Colonic mucosa (tissue), 4 donors: ENCODE measurements at regions of chrX and their contacts with region 1.

Region 1: GRCh38 chrX:116204932-116205331 is 34.4 kb downstream of the AGTR2 start:
- DNase-seq: no peak
- H3K4me3 ChIP-seq: no peak overlapping the region
- H3K27ac ChIP-seq: no peak overlapping the region
- H3K4me1 ChIP-seq: no peaks in the 10 kb centered on the region
- H3K27me3 ChIP-seq: peaks cover 2% of the 10 kb centered on the region
- CTCF ChIP-seq: peak; percentile 63

Region 2: DNA sequence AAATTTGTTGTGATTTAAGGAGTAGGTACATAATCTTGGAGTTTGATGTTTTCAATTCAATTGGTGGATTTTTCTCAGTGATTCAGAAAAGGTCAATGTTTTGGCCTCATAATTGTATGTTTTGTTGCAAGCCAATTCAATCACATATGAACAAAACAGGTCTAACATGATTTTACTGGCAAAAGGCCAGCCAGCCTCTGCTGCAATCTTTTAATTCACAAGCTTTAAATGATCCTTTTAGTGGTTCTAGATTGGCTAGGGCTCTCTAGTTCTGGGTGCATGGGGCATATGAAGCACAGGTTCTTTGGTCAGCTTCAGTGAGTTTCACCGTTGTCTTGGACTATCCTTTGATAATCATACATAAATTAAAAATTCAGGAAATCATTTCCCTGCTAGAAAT is 212.3 kb after region 1 on chrX:
- intact Hi-C with region 1: loop called (anchors 10 kb)
- DNase-seq: no peak
- H3K4me3 ChIP-seq: no peak overlapping the region
- H3K27ac ChIP-seq: no peak overlapping the region
- H3K4me1 ChIP-seq: no peaks in the 10 kb centered on the region
- H3K27me3 ChIP-seq: no peaks in the 10 kb centered on the region
- CTCF ChIP-seq: no peak

Region 3: GRCh38 chrX:116667346-116668134 is 462.6 kb after region 1 on chrX:
- intact Hi-C with region 1: loop called (anchors 5 kb)
- DNase-seq: no peak
- H3K4me3 ChIP-seq: no peak overlapping the region
- H3K27ac ChIP-seq: no peak overlapping the region
- H3K4me1 ChIP-seq: no peaks in the 10 kb centered on the region
- H3K27me3 ChIP-seq: no peaks in the 10 kb centered on the region
- CTCF ChIP-seq: no peak